A673 (cell line): ENCODE measurements at regions of chr3 and their contacts with region 1.

Region 1: DNA sequence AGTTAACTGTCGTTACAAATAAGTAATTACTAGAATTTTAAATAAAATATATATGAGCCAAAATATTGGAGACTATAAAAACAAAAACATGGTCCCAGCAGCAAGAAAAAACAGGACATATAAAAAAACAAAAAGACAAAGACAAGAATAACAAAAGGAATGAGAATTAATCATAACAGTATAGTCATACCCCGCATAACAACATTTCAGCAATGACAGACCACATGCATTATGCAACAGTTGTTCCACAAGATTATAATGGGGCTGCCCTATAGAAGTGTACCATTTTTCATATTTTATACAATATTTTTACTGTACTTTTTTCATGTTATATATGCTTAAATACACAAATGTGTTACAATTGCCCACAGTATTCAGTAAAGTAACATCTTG is 5.6 kb downstream of the HLTF start:
- DNase-seq: no peak
- H3K4me3 ChIP-seq: no peak overlapping the region
- H3K27ac ChIP-seq: no peak overlapping the region
- H3K4me1 ChIP-seq: peaks cover 16% of the 10 kb centered on the region
- H3K27me3 ChIP-seq: no peaks in the 10 kb centered on the region
- CTCF ChIP-seq: no peak

Region 2: DNA sequence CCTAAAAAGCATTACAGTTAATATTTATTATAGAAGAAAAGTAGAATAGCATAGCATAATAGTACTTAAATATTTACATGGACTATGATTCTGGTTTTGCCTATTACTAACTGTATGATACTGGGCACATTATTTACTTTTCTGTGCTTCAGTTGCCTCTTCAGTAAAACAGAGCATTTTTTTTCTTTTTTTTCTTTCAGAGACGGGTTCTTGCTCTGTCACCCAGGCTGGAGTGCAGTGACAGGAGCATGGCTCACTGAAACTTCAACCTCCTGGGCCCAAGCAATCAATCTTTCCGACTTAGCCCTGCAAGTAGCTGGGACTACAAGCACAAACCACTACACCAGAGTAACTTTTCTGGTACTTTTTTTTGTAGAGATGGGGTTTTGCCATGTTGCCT is 42.4 kb before region 1 on chr3:
- CTCF ChIA-PET with region 1: no interaction called
- POLR2A ChIA-PET with region 1: interaction called, 16 read pairs
- intact Hi-C with region 1: no loop called
- DNase-seq: no peak
- H3K4me3 ChIP-seq: no peak overlapping the region
- H3K27ac ChIP-seq: no peak overlapping the region
- H3K4me1 ChIP-seq: peaks cover 3% of the 10 kb centered on the region
- H3K27me3 ChIP-seq: no peaks in the 10 kb centered on the region
- CTCF ChIP-seq: no peak